ENCODE measurements at regions of chr1 and their contacts with region 1.

Region 1: GRCh38 chr1:145999321-146000241 is 3.2 kb upstream of the TXNIP start:
- DNase-seq: no peak
- H3K4me3 ChIP-seq: peak overlapping the region; percentile 70 to 85 (median 80)
- H3K27ac ChIP-seq: peak overlapping the region; percentile 94 to 96 (median 96)
- H3K4me1 ChIP-seq: peaks cover 35 to 59% (median 47%) of the 10 kb centered on the region in 4 donors
- H3K27me3 ChIP-seq: no peaks in the 10 kb centered on the region
- CTCF ChIP-seq: no peak
- EP300 ChIP-seq: no peak
- POLR2A ChIP-seq: no peak

Region 2: DNA sequence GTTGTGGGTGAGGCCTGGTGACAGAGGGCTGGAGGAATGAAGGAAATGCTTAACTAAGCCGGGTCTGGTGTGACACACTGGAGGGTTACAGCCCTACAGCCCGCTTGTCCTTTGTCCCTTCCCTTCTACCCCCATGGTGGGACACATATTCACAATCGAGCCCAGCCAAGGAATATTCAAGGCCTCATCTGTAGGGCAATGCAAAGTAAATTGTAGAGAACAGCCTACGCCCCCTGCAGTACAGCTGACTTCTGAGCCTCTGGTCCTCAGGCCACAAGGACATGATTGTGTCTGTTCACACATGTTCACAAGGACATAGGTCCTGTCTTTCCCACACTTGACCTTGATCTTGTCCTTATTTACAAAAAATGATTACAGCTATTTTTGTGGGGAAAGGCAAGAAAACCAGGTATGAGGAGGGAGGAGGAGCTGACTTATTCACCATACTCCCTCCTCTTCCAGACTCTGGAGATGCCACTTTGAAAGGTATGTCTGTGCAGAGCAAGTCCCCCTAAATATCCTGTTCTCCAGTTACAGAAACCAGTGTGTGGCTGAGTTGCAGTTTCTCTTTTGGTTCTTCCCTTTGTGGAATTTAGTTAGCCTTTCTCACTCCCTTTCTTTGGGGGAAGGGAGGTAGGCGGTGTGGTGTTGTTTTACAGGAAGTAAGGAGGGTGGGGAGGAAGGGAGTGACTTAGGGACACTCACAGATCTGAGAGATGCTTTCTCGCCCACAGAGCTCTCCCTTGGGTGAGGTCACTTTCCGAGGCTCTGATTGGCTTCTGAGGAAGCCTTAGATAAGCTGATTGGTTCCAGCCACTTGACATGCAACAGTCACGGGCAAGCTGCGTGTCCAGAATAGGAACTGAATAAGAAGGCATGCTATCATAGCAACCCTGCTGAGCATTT is 20.5 kb before region 1 on chr1:
- intact Hi-C with region 1: loop called (anchors 2 kb)
- DNase-seq: peak; percentile 99
- H3K4me3 ChIP-seq: peak overlapping the region; percentile 38 to 50 (median 41)
- H3K27ac ChIP-seq: peak overlapping the region; percentile 89 to 96 (median 93)
- H3K4me1 ChIP-seq: peaks cover 63 to 72% (median 70%) of the 10 kb centered on the region in 4 donors
- H3K27me3 ChIP-seq: no peaks in the 10 kb centered on the region
- CTCF ChIP-seq: peak; percentile 7 to 17 (median 12)
- EP300 ChIP-seq: peak; percentile 77
- POLR2A ChIP-seq: peak; percentile 6

Measured in esophagus muscularis mucosa (tissue), 4 donors.